ENCODE measurements at regions of chr17 and their contacts with region 1.

Region 1: GRCh38 chr17:64343853-64344637 is 46.6 kb downstream of the PECAM1 start:
- DNase-seq: no peak
- ATAC-seq: peak; percentile 94
- H3K4me3 ChIP-seq: no peak overlapping the region
- H3K27ac ChIP-seq: no peak overlapping the region
- H3K4me1 ChIP-seq: no peaks in the 10 kb centered on the region
- H3K27me3 ChIP-seq: no peaks in the 10 kb centered on the region
- CTCF ChIP-seq: no peak
- EP300 ChIP-seq: peak in 1 of 2 experiments; percentile 34; a peak in 2 of 4 replicates
- POLR2A ChIP-seq: no peak
- RAD21 ChIP-seq: no peak

Region 2: DNA sequence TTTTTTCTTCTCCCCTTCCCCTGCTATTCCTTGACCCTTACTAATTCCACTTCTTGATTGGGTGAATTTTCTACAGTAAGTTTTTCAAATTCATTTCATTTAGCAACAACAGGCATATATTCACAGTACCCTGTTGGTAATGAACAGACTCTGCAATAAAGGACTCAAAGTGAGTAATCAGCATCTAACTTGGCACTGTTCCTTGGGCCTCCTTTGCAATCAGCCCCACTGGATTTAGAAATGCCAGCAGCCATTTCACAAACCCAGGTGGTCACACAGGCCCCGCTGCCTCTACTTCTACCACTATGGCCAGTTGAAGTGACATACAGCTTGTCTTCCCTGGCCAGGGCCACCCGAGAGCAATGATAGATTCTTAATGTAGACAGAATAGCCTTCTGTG is 1011.8 kb before region 1 on chr17:
- CTCF ChIA-PET with region 1: no interaction called
- POLR2A ChIA-PET with region 1: no interaction called
- RAD21 ChIA-PET with region 1: no interaction called
- SMC1A ChIA-PET with region 1: no interaction called
- in situ Hi-C with region 1: no loop called
- intact Hi-C with region 1: no loop called
- DNase-seq: no peak
- ATAC-seq: no peak
- H3K4me3 ChIP-seq: no peak overlapping the region
- H3K27ac ChIP-seq: no peak overlapping the region
- H3K4me1 ChIP-seq: no peaks in the 10 kb centered on the region
- H3K27me3 ChIP-seq: no peaks in the 10 kb centered on the region
- CTCF ChIP-seq: no peak
- EP300 ChIP-seq: no peak
- POLR2A ChIP-seq: no peak
- RAD21 ChIP-seq: no peak

Region 3: GRCh38 chr17:64326395-64327054 is 17.5 kb before region 1 on chr17:
- CTCF ChIA-PET with region 1: interaction called, 6 read pairs
- POLR2A ChIA-PET with region 1: no interaction called
- RAD21 ChIA-PET with region 1: interaction called, 6 read pairs
- SMC1A ChIA-PET with region 1: interaction called, 12 read pairs
- in situ Hi-C with region 1: no loop called
- intact Hi-C with region 1: no loop called
- DNase-seq: no peak
- ATAC-seq: peak; percentile 80
- H3K4me3 ChIP-seq: no peak overlapping the region
- H3K27ac ChIP-seq: no peak overlapping the region
- H3K4me1 ChIP-seq: peaks cover 3% of the 10 kb centered on the region; the same call in 1 of the 2 replicates
- H3K27me3 ChIP-seq: no peaks in the 10 kb centered on the region
- CTCF ChIP-seq: no peak
- EP300 ChIP-seq: no peak
- POLR2A ChIP-seq: no peak
- RAD21 ChIP-seq: no peak

Region 4: GRCh38 chr17:64406321-64407200 is 62.5 kb after region 1 on chr17:
- CTCF ChIA-PET with region 1: interaction called, 3 read pairs
- POLR2A ChIA-PET with region 1: interaction called, 9 read pairs
- RAD21 ChIA-PET with region 1: interaction called, 12 read pairs
- SMC1A ChIA-PET with region 1: interaction called, 17 read pairs
- in situ Hi-C with region 1: no loop called
- intact Hi-C with region 1: no loop called
- DNase-seq: no peak
- ATAC-seq: no peak
- H3K4me3 ChIP-seq: no peak overlapping the region
- H3K27ac ChIP-seq: no peak overlapping the region
- H3K4me1 ChIP-seq: peaks cover 39% of the 10 kb centered on the region
- H3K27me3 ChIP-seq: no peaks in the 10 kb centered on the region
- CTCF ChIP-seq: no peak
- EP300 ChIP-seq: no peak
- POLR2A ChIP-seq: no peak
- RAD21 ChIP-seq: no peak